ENCODE measurements at regions of chr2 and their contacts with region 1.

Region 1: DNA sequence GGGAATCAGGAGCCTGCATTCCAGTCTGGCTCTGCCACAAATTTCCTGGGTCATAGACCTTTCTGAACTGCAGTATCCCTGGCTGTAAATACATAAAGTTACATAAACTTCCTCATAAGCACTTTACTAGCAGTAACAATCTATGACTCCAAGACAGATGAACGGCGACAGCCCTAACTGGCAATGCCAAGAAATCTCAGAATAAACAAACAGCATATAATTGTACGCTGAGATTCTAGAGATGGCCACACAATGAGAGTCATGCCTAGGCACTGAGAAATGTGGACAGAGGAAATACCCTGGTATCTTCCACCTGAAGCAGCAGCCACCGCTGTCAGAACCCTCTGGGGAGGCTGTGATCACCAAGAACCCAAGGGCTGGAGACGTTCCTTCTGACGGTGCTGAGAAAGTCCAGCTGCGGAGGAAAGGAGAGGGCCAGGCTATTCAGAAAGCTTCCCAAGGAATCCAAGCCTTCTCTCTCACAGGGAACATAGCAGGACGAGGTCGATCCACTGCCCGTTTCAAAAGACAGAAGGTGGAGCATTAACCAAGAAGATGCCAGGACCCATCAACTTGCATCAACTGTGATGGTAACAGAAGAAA is 89.3 kb upstream of the SLC66A3 start:
- DNase-seq: no peak
- H3K4me3 ChIP-seq: no peak overlapping the region
- H3K27ac ChIP-seq: no peak overlapping the region
- H3K4me1 ChIP-seq: no peaks in the 10 kb centered on the region
- H3K27me3 ChIP-seq: peaks cover 4% of the 10 kb centered on the region
- CTCF ChIP-seq: no peak

Region 2: GRCh38 chr2:11004199-11004598 is 61.8 kb before region 1 on chr2:
- dilution Hi-C with region 1: loop called (anchors 10 kb)
- DNase-seq: peak; percentile 33
- H3K4me3 ChIP-seq: no peak overlapping the region
- H3K27ac ChIP-seq: no peak overlapping the region
- H3K4me1 ChIP-seq: peaks cover 5% of the 10 kb centered on the region
- H3K27me3 ChIP-seq: peaks cover 4% of the 10 kb centered on the region
- CTCF ChIP-seq: no peak

Region 3: DNA sequence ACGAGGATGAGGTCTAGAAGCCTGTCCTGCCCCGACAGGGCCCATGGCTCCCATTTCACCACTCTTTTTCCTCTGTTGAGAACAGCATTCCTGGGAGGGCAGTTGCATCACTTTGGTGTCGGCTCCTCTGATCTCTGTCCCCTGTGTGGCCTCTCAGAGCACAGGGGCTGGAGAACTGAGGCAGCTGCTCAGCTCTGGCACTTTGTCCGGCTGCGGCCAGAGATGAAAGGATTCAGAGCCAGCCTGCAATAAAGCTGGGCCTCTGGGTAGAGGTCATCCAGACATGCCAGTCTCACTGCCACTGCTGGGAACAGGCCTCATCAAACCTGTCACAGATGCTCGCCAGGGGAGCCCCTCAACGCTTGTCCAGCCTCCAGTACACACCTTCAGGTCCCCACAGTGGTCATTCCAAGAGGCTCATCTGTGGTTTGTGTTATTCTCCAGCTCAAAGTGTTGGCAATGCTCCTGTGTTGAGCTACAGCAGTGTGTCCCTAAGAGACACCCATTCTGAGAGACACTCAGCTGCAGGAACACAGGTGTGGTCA is 291.5 kb after region 1 on chr2:
- dilution Hi-C with region 1: no loop called
- DNase-seq: no peak
- H3K4me3 ChIP-seq: no peak overlapping the region
- H3K27ac ChIP-seq: no peak overlapping the region
- H3K4me1 ChIP-seq: no peaks in the 10 kb centered on the region
- H3K27me3 ChIP-seq: no peaks in the 10 kb centered on the region
- CTCF ChIP-seq: no peak

Measured in keratinocyte (primary cell).